ENCODE measurements at regions of chr12 and their contacts with region 1.

Region 1: DNA sequence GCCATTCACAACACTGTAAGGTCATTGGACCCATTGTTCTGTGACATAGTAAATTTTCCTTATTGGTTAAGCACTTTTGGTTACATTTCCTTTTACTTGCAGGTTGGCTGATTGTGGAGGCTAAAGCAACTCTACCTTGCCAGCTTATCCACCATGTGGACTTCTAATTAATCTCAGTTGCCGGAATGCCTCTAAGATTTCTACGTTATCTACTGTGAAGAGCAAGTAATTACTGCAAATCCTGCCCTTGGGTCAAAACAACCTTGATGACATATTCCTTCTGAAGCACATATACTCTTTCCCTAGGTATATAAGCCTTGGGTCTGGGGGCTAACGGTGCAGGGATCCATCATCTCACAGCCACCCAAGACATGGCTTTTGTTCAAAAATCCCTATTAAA is 19.5 kb upstream of the MORN3 start:
- DNase-seq: no peak
- ATAC-seq: no peak
- H3K4me3 ChIP-seq: no peak overlapping the region
- H3K4me3 Mint-ChIP-seq: no peak overlapping the region
- H3K27ac ChIP-seq: no peak overlapping the region
- H3K27ac Mint-ChIP-seq: peak overlapping the region; percentile 10
- H3K4me1 ChIP-seq: peaks cover 4 to 16% of the 10 kb centered on the region in 2 donors
- H3K4me1 Mint-ChIP-seq: peaks cover 8% of the 10 kb centered on the region
- H3K27me3 ChIP-seq: no peaks in the 10 kb centered on the region
- H3K27me3 Mint-ChIP-seq: no peaks in the 10 kb centered on the region
- CTCF ChIP-seq: no peak

Region 2: GRCh38 chr12:121326996-121327674 is 361.8 kb before region 1 on chr12:
- CTCF ChIA-PET with region 1: no interaction called
- POLR2A ChIA-PET with region 1: no interaction called
- intact Hi-C with region 1: no loop called
- DNase-seq: no peak
- ATAC-seq: no peak
- H3K4me3 ChIP-seq: no peak overlapping the region
- H3K4me3 Mint-ChIP-seq: no peak overlapping the region
- H3K27ac ChIP-seq: no peak overlapping the region
- H3K27ac Mint-ChIP-seq: no peak overlapping the region
- H3K4me1 ChIP-seq: no peaks in the 10 kb centered on the region
- H3K4me1 Mint-ChIP-seq: no peaks in the 10 kb centered on the region
- H3K27me3 ChIP-seq: no peaks in the 10 kb centered on the region
- H3K27me3 Mint-ChIP-seq: no peaks in the 10 kb centered on the region
- CTCF ChIP-seq: no peak

Region 3: GRCh38 chr12:121849665-121850064 is 160.7 kb after region 1 on chr12:
- CTCF ChIA-PET with region 1: no interaction called
- POLR2A ChIA-PET with region 1: no interaction called
- intact Hi-C with region 1: no loop called
- DNase-seq: no peak
- ATAC-seq: no peak
- H3K4me3 ChIP-seq: no peak overlapping the region
- H3K4me3 Mint-ChIP-seq: no peak overlapping the region
- H3K27ac ChIP-seq: no peak overlapping the region
- H3K27ac Mint-ChIP-seq: no peak overlapping the region
- H3K4me1 ChIP-seq: peaks cover 0 to 17% of the 10 kb centered on the region in 2 donors
- H3K4me1 Mint-ChIP-seq: no peaks in the 10 kb centered on the region
- H3K27me3 ChIP-seq: no peaks in the 10 kb centered on the region
- H3K27me3 Mint-ChIP-seq: no peaks in the 10 kb centered on the region
- CTCF ChIP-seq: no peak

Region 4: DNA sequence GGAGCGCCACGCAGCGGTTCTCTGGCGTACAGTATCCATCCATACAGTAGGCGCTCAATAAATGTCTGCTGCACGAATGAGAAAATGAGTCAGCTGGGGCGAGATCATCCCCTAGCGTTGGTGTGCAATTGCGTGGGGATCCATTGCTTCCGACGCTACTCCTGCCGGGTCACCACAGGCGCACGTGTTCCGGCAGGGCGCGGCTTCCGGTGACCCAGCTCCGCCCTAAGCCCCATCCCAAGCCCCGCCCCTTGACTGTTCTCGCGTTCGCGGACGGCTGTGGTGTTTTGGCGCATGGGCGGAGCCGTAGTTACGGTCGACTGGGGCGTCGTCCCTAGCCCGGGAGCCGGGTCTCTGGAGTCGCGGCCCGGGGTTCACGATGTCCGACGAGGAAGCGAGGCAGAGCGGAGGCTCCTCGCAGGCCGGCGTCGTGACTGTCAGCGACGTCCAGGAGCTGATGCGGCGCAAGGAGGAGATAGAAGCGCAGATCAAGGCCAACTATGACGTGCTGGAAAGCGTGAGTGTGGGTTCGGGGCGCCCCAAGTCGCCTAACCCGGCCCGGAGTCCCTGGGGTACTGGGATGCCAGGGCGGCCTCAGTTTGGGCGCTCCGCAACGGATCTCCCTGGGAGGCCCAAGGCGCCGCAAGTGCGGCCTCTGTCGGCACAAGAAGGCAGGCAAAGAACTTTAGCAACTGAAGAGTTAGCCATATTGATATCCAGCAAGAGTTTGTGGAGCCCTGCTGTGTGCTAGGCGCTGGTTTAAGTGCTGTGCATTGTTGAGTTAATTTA is 199.7 kb after region 1 on chr12 and contains the start of gene PSMD9:
- CTCF ChIA-PET with region 1: no interaction called
- POLR2A ChIA-PET with region 1: no interaction called
- intact Hi-C with region 1: loop called (anchors 1 kb)
- DNase-seq: peak; percentile 98
- ATAC-seq: peak; percentile 96
- H3K4me3 ChIP-seq: peak within 1 kb of the TSS; percentile 70 to 92 (median 78)
- H3K4me3 Mint-ChIP-seq: peak within 1 kb of the TSS; percentile 99
- H3K27ac ChIP-seq: peak within 1 kb of the TSS; percentile 86 to 95
- H3K27ac Mint-ChIP-seq: peak within 1 kb of the TSS; percentile 99
- H3K4me1 ChIP-seq: peaks cover 15 to 19% of the 10 kb centered on the region in 2 donors
- H3K4me1 Mint-ChIP-seq: peaks cover 32% of the 10 kb centered on the region
- H3K27me3 ChIP-seq: peaks cover 0 to 5% (median 0%) of the 10 kb centered on the region in 4 experiments
- H3K27me3 Mint-ChIP-seq: no peaks in the 10 kb centered on the region
- CTCF ChIP-seq: peak; percentile 68
- total RNA-seq, gene PSMD9: 37.1 and 38.2 TPM in 2 replicates

Region 5: GRCh38 chr12:121980191-121980891 is 291.4 kb after region 1 on chr12:
- CTCF ChIA-PET with region 1: no interaction called
- POLR2A ChIA-PET with region 1: no interaction called
- intact Hi-C with region 1: no loop called
- DNase-seq: peak; percentile 85
- ATAC-seq: peak; percentile 74
- H3K4me3 ChIP-seq: peak overlapping the region in 4 of 5 experiments; percentile 2 to 39 (median 12)
- H3K4me3 Mint-ChIP-seq: peak overlapping the region; percentile 81
- H3K27ac ChIP-seq: peak overlapping the region; percentile 63 to 81
- H3K27ac Mint-ChIP-seq: peak overlapping the region; percentile 95
- H3K4me1 ChIP-seq: peaks cover 53 to 64% of the 10 kb centered on the region in 2 donors
- H3K4me1 Mint-ChIP-seq: peaks cover 55% of the 10 kb centered on the region
- H3K27me3 ChIP-seq: no peaks in the 10 kb centered on the region
- H3K27me3 Mint-ChIP-seq: no peaks in the 10 kb centered on the region
- CTCF ChIP-seq: no peak